Heart right ventricle (tissue), 16 donors: ENCODE measurements at regions of chr4 and their contacts with region 1.

Region 1: DNA sequence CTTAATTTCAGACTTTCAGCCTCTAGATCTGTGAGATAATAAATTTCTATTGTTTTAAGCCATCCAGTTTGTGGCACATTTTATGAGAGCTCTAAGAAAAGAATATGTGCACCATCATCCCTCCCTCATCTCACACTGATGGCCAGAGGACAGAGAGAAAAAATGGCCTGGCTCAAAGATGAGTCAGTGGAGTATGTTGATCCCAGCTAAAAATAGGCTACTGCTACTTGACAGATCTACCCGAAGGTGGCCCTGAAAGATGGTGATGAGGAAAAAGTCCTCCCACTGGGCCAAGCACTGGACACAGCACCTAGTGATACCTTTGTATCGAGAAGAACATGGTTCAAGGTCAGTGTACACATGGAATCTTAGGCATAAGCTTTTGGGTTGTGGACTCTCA is 38.2 kb upstream of the DCTD start:
- DNase-seq: no peak
- ATAC-seq: no peak
- H3K4me3 ChIP-seq: no peak overlapping the region
- H3K27ac ChIP-seq: no peak overlapping the region
- H3K4me1 ChIP-seq: no peaks in the 10 kb centered on the region
- H3K27me3 ChIP-seq: no peaks in the 10 kb centered on the region
- CTCF ChIP-seq: no peak

Region 2: GRCh38 chr4:182904211-182904761 is 51.1 kb before region 1 on chr4:
- intact Hi-C with region 1: no loop called
- DNase-seq: no peak
- ATAC-seq: peak in 1 of 8 donors; percentile 24
- H3K4me3 ChIP-seq: no peak overlapping the region
- H3K27ac ChIP-seq: no peak overlapping the region
- H3K4me1 ChIP-seq: no peaks in the 10 kb centered on the region
- H3K27me3 ChIP-seq: no peaks in the 10 kb centered on the region
- CTCF ChIP-seq: no peak

Region 3: DNA sequence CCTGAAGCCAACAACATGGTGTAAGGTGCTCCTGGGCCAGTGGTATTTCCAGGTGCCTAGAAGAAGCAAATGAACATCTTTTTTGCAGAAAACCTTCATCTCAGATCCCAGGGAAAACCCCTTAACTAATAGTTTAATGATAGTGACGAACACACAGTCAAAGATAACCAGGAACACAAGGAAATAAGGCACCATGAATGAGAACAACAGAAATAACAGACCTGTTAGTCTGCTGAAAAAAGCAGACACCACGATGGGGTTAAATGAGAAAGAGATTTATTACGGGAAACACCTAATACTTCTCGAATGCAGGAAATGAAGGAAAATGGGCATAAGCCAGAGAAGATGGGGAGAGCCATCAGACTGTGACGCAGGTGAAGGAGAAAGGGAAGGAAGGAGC is 113.1 kb after region 1 on chr4:
- intact Hi-C with region 1: no loop called
- DNase-seq: no peak
- ATAC-seq: no peak
- H3K4me3 ChIP-seq: no peak overlapping the region
- H3K27ac ChIP-seq: no peak overlapping the region
- H3K4me1 ChIP-seq: peaks cover 0 to 13% (median 0%) of the 10 kb centered on the region in 9 donors
- H3K27me3 ChIP-seq: no peaks in the 10 kb centered on the region
- CTCF ChIP-seq: no peak

Region 4: GRCh38 chr4:183165376-183165775 is 210.0 kb after region 1 on chr4:
- intact Hi-C with region 1: loop called in 1 of 10 experiments (anchors 5 kb)
- DNase-seq: no peak
- ATAC-seq: peak in 5 of 8 donors; percentile 27 to 72 (median 62)
- H3K4me3 ChIP-seq: no peak overlapping the region
- H3K27ac ChIP-seq: peak overlapping the region; percentile 12 to 72 (median 45)
- H3K4me1 ChIP-seq: peaks cover 10 to 52% (median 33%) of the 10 kb centered on the region in 9 donors
- H3K27me3 ChIP-seq: no peaks in the 10 kb centered on the region
- CTCF ChIP-seq: no peak

Region 5: DNA sequence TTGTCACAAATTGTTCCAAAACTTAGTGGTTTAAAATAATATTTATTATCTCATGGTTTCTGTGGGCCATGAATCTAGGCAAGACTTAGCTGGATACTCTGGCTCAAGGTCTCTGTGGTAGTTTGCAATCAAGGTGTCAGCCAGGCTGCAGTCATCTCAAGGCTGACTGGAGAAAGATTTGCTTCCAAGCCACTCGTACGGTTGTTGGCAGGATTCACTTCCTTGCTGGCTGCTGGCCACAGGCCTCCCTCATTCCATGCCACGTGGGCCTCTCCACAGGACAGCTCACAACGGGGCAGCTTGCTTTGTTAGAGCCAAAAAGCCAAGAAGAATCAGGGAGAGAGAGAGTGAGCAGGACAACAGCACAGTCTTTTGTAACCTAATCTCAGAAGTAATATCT is 245.0 kb after region 1 on chr4:
- intact Hi-C with region 1: no loop called
- DNase-seq: peak; percentile 22 to 63
- ATAC-seq: peak in 7 of 8 donors; percentile 16 to 84 (median 43)
- H3K4me3 ChIP-seq: no peak overlapping the region
- H3K27ac ChIP-seq: peak overlapping the region in 1 of 10 donors; percentile 7
- H3K4me1 ChIP-seq: peaks cover 0 to 16% (median 5%) of the 10 kb centered on the region in 9 donors
- H3K27me3 ChIP-seq: no peaks in the 10 kb centered on the region
- CTCF ChIP-seq: no peak

Region 6: DNA sequence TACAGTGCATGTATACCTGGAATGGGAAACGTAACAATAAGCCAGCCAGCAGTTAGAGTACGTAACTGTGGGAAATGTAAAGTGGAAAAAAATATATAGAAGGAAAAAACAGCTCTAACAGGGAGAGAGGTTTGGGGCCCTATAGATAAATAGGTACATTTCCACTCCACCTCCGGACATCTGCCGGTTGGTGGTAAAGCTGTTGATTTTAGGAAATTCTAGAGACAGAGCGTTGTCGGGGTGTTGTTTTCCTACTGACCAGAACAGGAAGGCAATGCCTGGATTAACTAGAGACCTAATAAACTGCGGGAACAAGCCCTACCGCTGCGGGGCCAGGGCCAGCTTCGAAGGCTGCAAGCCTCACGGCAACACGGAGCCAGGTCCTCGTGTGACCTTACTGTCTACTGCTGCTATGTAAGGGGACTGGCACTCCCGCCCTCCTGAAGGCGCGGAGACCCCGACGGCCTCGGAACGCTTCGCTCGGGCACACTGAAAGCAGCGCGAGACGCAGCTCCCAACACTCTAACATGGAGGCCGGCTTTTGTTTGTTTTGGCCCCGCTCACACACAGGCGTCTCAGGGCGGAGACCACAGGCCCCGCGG is 488.3 kb after region 1 on chr4:
- intact Hi-C with region 1: no loop called
- DNase-seq: no peak
- ATAC-seq: peak; percentile 31 to 71 (median 48)
- H3K4me3 ChIP-seq: peak overlapping the region; percentile 68 to 99 (median 94)
- H3K27ac ChIP-seq: peak overlapping the region; percentile 94 to 100 (median 98)
- H3K4me1 ChIP-seq: peaks cover 0 to 48% (median 41%) of the 10 kb centered on the region in 9 donors
- H3K27me3 ChIP-seq: no peaks in the 10 kb centered on the region
- CTCF ChIP-seq: peak in 1 of 9 donors; percentile 13